ENCODE measurements at regions of chr5 and their contacts with region 1.

Region 1: DNA sequence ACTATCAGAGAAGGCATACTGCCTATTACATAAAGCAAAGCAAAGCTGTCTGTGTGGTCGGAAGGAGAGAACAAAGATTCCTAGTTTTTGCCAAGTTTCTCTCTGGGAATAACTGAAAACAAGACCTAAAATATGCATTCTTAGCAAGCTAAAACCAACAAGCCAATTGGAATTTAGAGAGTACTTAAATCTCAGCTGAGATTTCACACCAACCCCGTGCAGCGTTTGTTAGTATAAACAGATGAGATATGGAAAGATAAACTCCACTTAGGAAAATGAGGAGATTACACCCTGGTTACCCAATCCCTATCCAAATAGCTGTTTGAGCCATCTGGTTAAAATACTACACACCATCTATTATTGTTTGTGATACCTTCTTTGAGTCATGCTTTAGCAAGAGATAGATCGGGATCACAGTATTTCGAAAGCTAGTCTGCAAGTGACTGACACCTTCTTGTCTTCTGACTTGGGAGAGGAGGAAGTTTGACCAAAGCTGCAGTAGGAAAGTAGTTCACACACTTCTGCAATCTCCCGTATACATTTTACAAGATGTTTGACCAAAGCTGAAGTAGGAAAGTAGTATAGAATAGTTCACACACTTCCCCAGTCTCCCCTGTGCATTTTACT is 18.2 kb downstream of the FAF2 start:
- DNase-seq: peak; percentile 84
- H3K4me3 Mint-ChIP-seq: peak overlapping the region; percentile 11
- H3K27ac Mint-ChIP-seq: peak overlapping the region; percentile 24
- H3K4me1 Mint-ChIP-seq: peaks cover 35% of the 10 kb centered on the region
- H3K27me3 Mint-ChIP-seq: no peaks in the 10 kb centered on the region
- CTCF ChIP-seq: no peak

Region 2: DNA sequence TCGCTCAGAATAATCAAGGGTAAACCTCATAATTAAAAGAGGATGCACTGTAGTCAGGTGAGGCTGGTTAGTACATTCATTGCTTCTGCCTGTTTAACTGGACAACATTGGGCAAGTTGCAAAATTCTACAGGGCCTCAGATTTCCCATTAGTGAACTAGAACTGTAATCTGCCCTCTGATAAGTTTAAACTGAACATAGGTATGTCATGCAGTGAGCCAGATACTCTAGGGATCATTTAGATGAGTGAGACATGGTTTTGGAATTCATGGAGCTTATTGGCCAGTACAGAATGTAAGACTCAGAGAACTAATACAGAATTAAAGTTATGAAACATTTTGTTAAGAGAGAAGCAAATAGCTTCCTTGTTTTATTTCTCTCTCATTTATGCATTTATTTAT is 35.0 kb after region 1 on chr5:
- CTCF ChIA-PET with region 1: no interaction called
- POLR2A ChIA-PET with region 1: interaction called, 16 read pairs
- intact Hi-C with region 1: no loop called
- DNase-seq: no peak
- H3K4me3 Mint-ChIP-seq: no peak overlapping the region
- H3K27ac Mint-ChIP-seq: no peak overlapping the region
- H3K4me1 Mint-ChIP-seq: peaks cover 6% of the 10 kb centered on the region
- H3K27me3 Mint-ChIP-seq: no peaks in the 10 kb centered on the region
- CTCF ChIP-seq: no peak

Measured in MCF 10A (cell line).